Left lung (tissue), 14 donors: ENCODE measurements at regions of chr6 and their contacts with region 1.

Region 1: GRCh38 chr6:116279260-116280063 is at the start of gene TSPYL1:
- DNase-seq: peak; percentile 94 to 98 (median 96)
- ATAC-seq: peak; percentile 95
- H3K4me3 ChIP-seq: peak within 1 kb of the TSS; percentile 88 to 95
- H3K27ac ChIP-seq: peak within 1 kb of the TSS; percentile 98 to 99
- H3K4me1 ChIP-seq: peaks cover 28 to 54% of the 10 kb centered on the region in 2 donors
- H3K27me3 ChIP-seq: no peaks in the 10 kb centered on the region
- CTCF ChIP-seq: peak in 1 of 2 donors; percentile 1
- polyA plus RNA-seq, gene TSPYL1: 65.6 to 100 (median 81.5) TPM

Region 2: GRCh38 chr6:116531675-116532570 is 252.5 kb after region 1 on chr6:
- intact Hi-C with region 1: loop called in 1 of 2 experiments (anchors 10 kb)
- DNase-seq: peak in 3 of 4 donors; percentile 43 to 68 (median 54)
- ATAC-seq: peak; percentile 94
- H3K4me3 ChIP-seq: no peak overlapping the region
- H3K27ac ChIP-seq: no peak overlapping the region
- H3K4me1 ChIP-seq: peaks cover 0 to 6% of the 10 kb centered on the region in 2 donors
- H3K27me3 ChIP-seq: no peaks in the 10 kb centered on the region
- CTCF ChIP-seq: peak; percentile 76 to 78